ENCODE measurements at regions of chr3 and their contacts with region 1.

Region 1: DNA sequence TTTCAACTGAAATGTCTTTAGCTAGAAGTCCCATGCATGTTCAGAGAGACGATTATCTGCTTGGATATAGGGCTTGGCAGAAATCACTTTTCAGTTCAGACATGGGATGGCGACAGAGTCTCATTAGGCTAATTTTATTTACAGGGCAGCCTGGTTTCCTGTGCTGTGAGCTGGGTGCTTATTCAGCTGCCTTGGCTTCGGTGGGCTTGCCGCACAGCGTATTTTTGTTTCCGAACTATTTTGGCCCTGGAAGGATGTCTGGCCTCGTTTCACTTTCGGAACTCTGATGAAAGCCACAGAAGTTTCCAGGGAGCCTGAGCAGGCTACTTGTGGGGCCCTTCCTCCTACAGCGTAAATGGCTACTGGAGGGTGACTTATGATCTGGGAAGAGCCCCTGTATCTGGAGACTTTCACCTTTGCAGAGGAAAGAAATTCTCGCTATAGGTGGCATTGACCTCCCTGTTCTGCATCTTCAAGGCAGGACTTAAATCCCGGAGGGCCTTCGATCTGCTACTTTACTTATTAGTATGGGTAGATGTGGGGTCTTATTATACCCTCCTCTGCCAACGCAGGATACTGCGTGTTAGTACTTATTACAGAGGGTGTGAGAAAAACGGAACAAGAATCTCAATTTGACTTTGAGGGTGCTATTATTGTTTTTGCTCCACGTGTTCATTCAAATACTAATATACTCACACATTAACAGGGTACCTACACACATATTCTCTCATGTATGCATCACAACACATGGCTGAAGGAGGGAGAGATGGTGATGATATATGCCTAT is 364.0 kb upstream of the RBMS3 start:
- DNase-seq: peak; percentile 60
- H3K4me3 ChIP-seq: peak overlapping the region; percentile 38 to 55
- H3K27ac ChIP-seq: peak overlapping the region; percentile 34 to 93
- H3K4me1 ChIP-seq: peaks cover 6 to 10% of the 10 kb centered on the region in 2 experiments
- H3K27me3 ChIP-seq: no peaks in the 10 kb centered on the region
- CTCF ChIP-seq: peak; percentile 71
- EP300 ChIP-seq: peak in 1 of 2 experiments; percentile 46; a peak in 1 of 4 replicates
- RAD21 ChIP-seq: peak; percentile 92

Region 2: GRCh38 chr3:28667646-28668621 is 249.0 kb before region 1 on chr3:
- CTCF ChIA-PET with region 1: interaction called, 14 read pairs
- POLR2A ChIA-PET with region 1: no interaction called
- DNase-seq: peak; percentile 64
- H3K4me3 ChIP-seq: no peak overlapping the region; a peak in 1 of 4 replicates
- H3K27ac ChIP-seq: peak overlapping the region in 1 of 2 experiments; percentile 94; a peak in 2 of 4 replicates
- H3K4me1 ChIP-seq: peaks cover 0 to 14% of the 10 kb centered on the region in 2 experiments; a peak in 2 of 4 replicates
- H3K27me3 ChIP-seq: no peaks in the 10 kb centered on the region
- CTCF ChIP-seq: peak; percentile 86
- EP300 ChIP-seq: peak in 1 of 2 experiments; percentile 89; a peak in 2 of 4 replicates
- RAD21 ChIP-seq: peak; percentile 74

Region 3: DNA sequence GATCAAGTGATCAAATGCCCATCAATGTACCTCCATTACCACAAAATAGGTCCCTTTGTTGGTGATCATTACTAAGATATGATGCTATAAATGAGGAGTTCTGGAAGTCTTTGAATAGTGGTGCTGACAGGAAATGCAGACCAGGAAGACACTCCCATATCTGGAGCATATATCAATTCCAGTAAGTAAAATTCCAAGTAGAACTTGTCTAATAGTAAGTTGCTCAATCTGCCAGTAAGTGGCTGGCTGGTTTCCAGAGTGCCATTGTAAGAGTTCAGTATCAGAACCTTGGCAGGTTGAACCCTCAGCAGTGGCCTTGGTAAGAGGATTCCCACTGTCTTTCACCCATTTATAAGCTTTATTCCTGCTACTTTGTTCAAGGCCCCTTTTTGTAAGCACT is 15.9 kb before region 1 on chr3:
- CTCF ChIA-PET with region 1: interaction called, 11 read pairs
- POLR2A ChIA-PET with region 1: no interaction called
- DNase-seq: no peak
- H3K4me3 ChIP-seq: no peak overlapping the region
- H3K27ac ChIP-seq: peak overlapping the region in 1 of 2 experiments; percentile 22; a peak in 2 of 4 replicates
- H3K4me1 ChIP-seq: no peaks in the 10 kb centered on the region; a peak in 1 of 4 replicates
- H3K27me3 ChIP-seq: no peaks in the 10 kb centered on the region
- CTCF ChIP-seq: no peak
- EP300 ChIP-seq: no peak
- RAD21 ChIP-seq: no peak

Region 4: DNA sequence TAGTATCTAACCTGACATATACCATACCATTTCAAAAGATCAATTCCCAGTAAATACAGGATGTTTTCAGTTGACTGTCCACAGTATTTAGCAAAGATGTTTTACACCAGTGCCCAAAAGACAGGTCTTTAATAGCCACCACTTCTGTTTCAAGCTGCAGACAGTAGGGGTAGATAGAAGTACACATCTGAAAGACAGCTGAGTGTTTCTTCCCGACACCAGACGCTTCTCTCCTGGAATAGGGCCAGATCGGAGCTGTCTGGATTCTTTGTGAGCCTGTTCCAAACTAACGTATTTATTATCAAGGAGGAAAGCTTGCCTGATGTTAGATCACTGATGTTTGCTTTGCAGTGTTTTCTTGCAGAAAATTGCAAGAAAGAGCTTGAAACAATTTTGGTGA is 227.9 kb after region 1 on chr3:
- CTCF ChIA-PET with region 1: interaction called, 22 read pairs
- POLR2A ChIA-PET with region 1: no interaction called
- DNase-seq: peak; percentile 55
- H3K4me3 ChIP-seq: peak overlapping the region in 1 of 2 experiments; percentile 34; a peak in 1 of 4 replicates
- H3K27ac ChIP-seq: peak overlapping the region; percentile 14 to 98; a peak in 3 of 4 replicates
- H3K4me1 ChIP-seq: peaks cover 23 to 25% of the 10 kb centered on the region in 2 experiments
- H3K27me3 ChIP-seq: no peaks in the 10 kb centered on the region
- CTCF ChIP-seq: peak; percentile 58
- EP300 ChIP-seq: peak in 1 of 2 experiments; percentile 93; a peak in 3 of 4 replicates
- RAD21 ChIP-seq: peak; percentile 94

Region 5: GRCh38 chr3:29335438-29335837 is 418.5 kb after region 1 on chr3:
- CTCF ChIA-PET with region 1: interaction called, 10 read pairs
- POLR2A ChIA-PET with region 1: interaction called, 3 read pairs
- DNase-seq: peak; percentile 10
- H3K4me3 ChIP-seq: peak overlapping the region; percentile 34 to 54
- H3K27ac ChIP-seq: peak overlapping the region; percentile 96 to 100
- H3K4me1 ChIP-seq: peaks cover 60 to 88% of the 10 kb centered on the region in 2 experiments
- H3K27me3 ChIP-seq: no peaks in the 10 kb centered on the region
- CTCF ChIP-seq: no peak
- EP300 ChIP-seq: peak; percentile 73 to 79
- RAD21 ChIP-seq: peak; percentile 35; the same call in 1 of the 2 replicates

Region 6: GRCh38 chr3:29642393-29643033 is 725.6 kb after region 1 on chr3:
- CTCF ChIA-PET with region 1: interaction called, 12 read pairs
- POLR2A ChIA-PET with region 1: no interaction called
- DNase-seq: peak; percentile 17
- H3K4me3 ChIP-seq: peak overlapping the region; percentile 41 to 42
- H3K27ac ChIP-seq: peak overlapping the region; percentile 92 to 100
- H3K4me1 ChIP-seq: peaks cover 17 to 54% of the 10 kb centered on the region in 2 experiments; a peak in 3 of 4 replicates
- H3K27me3 ChIP-seq: no peaks in the 10 kb centered on the region
- CTCF ChIP-seq: no peak
- EP300 ChIP-seq: no peak
- RAD21 ChIP-seq: peak; percentile 42

Region 7: DNA sequence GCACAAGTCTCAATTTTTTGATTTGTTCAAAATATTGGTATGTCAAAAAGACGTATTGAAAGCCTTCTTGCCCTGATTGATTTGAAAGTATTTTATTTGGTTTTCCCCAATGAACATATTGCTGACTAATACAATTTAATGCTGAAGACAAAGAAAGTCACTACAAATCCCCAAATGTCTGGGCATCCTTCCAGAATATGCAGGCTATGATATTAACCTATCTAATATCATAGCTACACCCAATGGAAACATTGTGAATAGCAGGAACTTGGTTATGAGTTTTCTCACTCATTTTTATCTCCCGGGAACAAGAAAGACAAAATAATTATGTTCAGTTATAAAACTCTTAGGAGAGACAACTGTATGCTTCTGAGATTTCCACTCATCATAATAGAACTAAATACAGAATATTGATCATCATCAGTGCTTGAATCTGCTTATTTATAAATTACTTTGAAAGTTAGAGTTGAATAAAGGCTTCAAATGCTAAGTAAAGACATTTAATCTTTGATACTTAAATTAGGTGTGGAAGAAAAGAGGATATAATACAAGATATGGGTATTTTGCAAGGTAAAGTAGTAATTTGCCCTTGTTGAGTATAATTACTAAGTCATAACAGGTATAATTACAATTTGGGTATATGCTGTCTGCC is 847.8 kb after region 1 on chr3:
- CTCF ChIA-PET with region 1: interaction called, 11 read pairs
- POLR2A ChIA-PET with region 1: no interaction called
- DNase-seq: no peak
- H3K4me3 ChIP-seq: no peak overlapping the region
- H3K27ac ChIP-seq: peak overlapping the region; percentile 71 to 85
- H3K4me1 ChIP-seq: peaks cover 20 to 32% of the 10 kb centered on the region in 2 experiments
- H3K27me3 ChIP-seq: no peaks in the 10 kb centered on the region
- CTCF ChIP-seq: peak; percentile 84
- EP300 ChIP-seq: peak in 1 of 2 experiments; percentile 32; a peak in 1 of 4 replicates
- RAD21 ChIP-seq: peak; percentile 89